Astrocyte of the cerebellum (primary cell): ENCODE measurements at regions of chr21 and their contacts with region 1.

Region 1: GRCh38 chr21:34762761-34763160 is 94.0 kb downstream of the CLIC6 start:
- DNase-seq: peak; percentile 57
- H3K4me3 ChIP-seq: no peak overlapping the region
- CTCF ChIP-seq: peak; percentile 34

Region 2: DNA sequence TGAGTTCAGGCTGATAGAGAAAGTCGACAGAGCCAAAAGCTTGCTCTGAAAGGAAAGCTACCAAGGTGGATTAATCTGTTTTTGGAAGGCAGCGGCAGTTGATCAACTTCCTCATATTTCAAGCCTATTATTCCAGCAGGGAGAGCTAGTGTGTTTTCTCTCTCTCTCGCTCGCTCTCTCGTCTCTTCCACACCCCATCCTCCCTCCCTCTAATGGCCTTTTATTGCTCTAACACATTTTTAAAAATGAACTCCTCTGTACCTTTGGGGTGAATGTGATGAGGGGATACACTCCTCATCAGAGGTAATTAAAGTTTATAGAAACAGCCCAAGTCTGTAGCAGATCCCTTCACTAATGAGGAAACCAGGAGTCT is 32.4 kb after region 1 on chr21:
- in situ Hi-C with region 1: loop called (anchors 5 kb)
- DNase-seq: no peak
- H3K4me3 ChIP-seq: no peak overlapping the region
- CTCF ChIP-seq: peak; percentile 12